Esophagus squamous epithelium (tissue), 5 donors: ENCODE measurements at regions of chr19 and their contacts with region 1.

Region 1: DNA sequence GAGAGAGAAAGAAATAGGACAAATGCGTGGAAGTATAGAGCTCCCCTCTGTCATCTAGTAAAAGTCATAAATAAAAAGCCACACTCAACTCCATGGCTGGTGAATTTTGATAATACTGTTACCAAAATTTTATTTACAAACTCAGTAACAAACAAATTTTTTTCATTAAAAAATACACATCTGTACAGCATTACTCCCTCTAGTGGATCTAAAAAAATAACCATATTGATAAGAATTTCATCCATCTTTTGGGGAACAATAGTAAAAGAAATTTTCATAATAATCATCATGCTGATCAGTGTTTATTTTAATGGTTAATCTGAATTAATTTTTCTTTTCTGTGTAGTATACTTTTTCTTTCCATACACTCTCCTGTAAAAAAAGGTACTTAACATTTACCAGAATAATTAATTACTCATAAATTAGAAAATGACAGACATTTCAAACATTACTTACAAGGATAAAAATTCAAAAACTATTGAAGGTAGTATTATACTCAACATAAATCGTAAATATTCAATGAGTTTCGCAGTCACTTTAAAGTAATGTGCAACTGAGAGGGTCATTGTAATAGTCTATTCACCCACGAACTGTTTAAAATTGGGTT is 173.5 kb upstream of the LSM14A start:
- DNase-seq: no peak
- H3K4me3 ChIP-seq: no peak overlapping the region
- H3K27ac ChIP-seq: no peak overlapping the region
- H3K4me1 ChIP-seq: peaks cover 0 to 6% (median 0%) of the 10 kb centered on the region in 3 donors
- H3K27me3 ChIP-seq: peaks cover 0 to 2% (median 0%) of the 10 kb centered on the region in 4 donors
- CTCF ChIP-seq: peak in 5 of 6 experiments; percentile 10 to 54 (median 42)
- POLR2A ChIP-seq: no peak

Region 2: DNA sequence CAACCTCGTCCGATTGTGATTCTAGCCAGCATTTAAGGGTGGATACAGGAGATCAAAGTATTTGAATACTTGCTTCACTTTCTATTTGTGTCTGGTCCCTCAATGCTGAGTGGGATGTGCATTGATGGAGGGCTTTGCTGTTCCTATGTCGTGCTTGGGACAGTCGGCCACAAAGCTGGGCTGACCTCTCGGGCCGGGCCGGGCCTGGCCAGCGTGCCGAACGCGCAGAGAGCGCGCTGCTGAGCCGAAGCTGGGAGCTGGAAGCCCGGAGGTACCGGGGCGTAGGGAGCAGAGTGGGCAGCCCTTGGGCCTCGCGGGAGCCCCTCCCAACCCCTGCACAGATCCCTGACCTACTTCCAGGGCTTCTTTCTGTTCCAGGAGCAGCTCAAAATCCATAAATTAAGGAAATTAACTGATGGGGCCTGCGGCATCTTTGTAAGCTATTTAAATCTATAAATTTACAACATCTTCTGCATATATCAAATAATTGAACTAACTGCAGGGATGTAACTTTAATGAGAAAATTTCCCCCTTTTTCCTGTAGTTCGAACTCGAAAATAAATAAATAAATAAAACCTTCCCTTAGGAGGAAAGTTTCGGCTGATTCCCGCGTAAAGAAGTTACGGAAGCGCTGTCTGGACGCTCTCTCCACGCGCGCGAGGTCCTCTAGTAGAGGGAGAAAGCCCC is 204.0 kb before region 1 on chr19:
- intact Hi-C with region 1: loop called (anchors 5 kb)
- DNase-seq: no peak
- H3K4me3 ChIP-seq: peak overlapping the region; percentile 59 to 91 (median 81)
- H3K27ac ChIP-seq: peak overlapping the region; percentile 89 to 98 (median 98)
- H3K4me1 ChIP-seq: peaks cover 9 to 37% (median 11%) of the 10 kb centered on the region in 3 donors
- H3K27me3 ChIP-seq: peaks cover 0 to 4% (median 0%) of the 10 kb centered on the region in 4 donors
- CTCF ChIP-seq: no peak
- POLR2A ChIP-seq: no peak